Transverse colon (tissue), 4 donors: ENCODE measurements at regions of chr9 and their contacts with region 1.

Region 1: GRCh38 chr9:74773886-74774479 is 113.7 kb downstream of the TRPM6 start:
- DNase-seq: peak; percentile 87
- H3K4me3 ChIP-seq: no peak overlapping the region
- H3K27ac ChIP-seq: no peak overlapping the region
- H3K4me1 ChIP-seq: peaks cover 0 to 8% (median 0%) of the 10 kb centered on the region in 4 donors
- H3K27me3 ChIP-seq: no peaks in the 10 kb centered on the region
- CTCF ChIP-seq: peak; percentile 86 to 90 (median 87)
- EP300 ChIP-seq: no peak
- POLR2A ChIP-seq: no peak

Region 2: GRCh38 chr9:73132034-73132776 is 1641.8 kb before region 1 on chr9:
- in situ Hi-C with region 1: no loop called
- intact Hi-C with region 1: no loop called
- DNase-seq: peak; percentile 65
- H3K4me3 ChIP-seq: peak overlapping the region; percentile 39 to 59 (median 42)
- H3K27ac ChIP-seq: peak overlapping the region; percentile 73 to 86 (median 82)
- H3K4me1 ChIP-seq: peaks cover 0 to 19% (median 8%) of the 10 kb centered on the region in 4 donors
- H3K27me3 ChIP-seq: no peaks in the 10 kb centered on the region
- CTCF ChIP-seq: no peak
- EP300 ChIP-seq: no peak
- POLR2A ChIP-seq: peak; percentile 66

Region 3: DNA sequence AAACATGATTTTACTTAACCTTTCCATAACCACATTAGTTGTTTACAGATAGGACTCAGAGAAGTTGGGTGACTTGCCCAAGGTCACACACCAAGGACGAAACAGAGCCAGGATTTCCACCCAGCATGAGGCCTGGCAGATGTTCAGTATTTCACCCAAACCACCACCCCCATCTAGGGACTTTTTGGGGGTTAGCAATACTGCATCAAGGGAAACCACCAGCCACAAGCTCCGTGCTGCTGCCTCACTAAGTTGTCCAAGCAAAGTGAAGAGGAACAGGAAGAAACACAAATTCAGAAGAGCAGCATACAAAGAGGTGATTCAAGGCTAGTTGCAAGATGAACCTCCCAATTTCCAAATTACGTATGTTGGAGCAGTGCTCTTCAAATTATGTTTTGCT is 496.5 kb before region 1 on chr9:
- in situ Hi-C with region 1: no loop called
- intact Hi-C with region 1: no loop called
- DNase-seq: no peak
- H3K4me3 ChIP-seq: no peak overlapping the region
- H3K27ac ChIP-seq: no peak overlapping the region
- H3K4me1 ChIP-seq: no peaks in the 10 kb centered on the region
- H3K27me3 ChIP-seq: no peaks in the 10 kb centered on the region
- CTCF ChIP-seq: no peak
- EP300 ChIP-seq: no peak
- POLR2A ChIP-seq: no peak

Region 4: DNA sequence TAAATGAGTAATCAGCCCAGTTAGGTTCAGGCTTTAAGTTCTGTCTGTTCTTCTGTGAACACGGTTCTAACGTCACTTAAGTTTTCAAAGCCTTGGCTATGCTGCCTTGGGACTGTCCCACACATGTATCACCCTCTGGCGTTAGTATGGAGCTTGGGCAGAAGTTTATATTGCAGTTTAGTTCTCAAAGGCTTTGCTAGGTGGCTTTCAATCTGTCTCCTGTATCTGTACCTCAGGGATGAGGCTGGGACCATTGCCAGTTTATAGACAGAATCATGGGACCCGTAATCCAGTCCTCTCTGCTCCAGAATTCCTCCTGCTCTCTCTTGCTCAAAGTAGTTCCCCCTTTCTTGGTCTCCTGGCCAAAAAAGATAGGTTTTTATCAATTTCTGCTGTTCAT is 166.6 kb after region 1 on chr9:
- in situ Hi-C with region 1: loop called in 1 of 4 experiments (anchors 10 kb)
- intact Hi-C with region 1: no loop called
- DNase-seq: peak; percentile 18
- H3K4me3 ChIP-seq: no peak overlapping the region
- H3K27ac ChIP-seq: no peak overlapping the region
- H3K4me1 ChIP-seq: no peaks in the 10 kb centered on the region
- H3K27me3 ChIP-seq: no peaks in the 10 kb centered on the region
- CTCF ChIP-seq: peak in 1 of 5 experiments; percentile 6
- EP300 ChIP-seq: no peak
- POLR2A ChIP-seq: no peak

Region 5: GRCh38 chr9:75001719-75002422 is 227.9 kb after region 1 on chr9:
- in situ Hi-C with region 1: loop called (anchors 5 to 10 kb)
- intact Hi-C with region 1: loop called (anchors 2 kb)
- DNase-seq: no peak
- H3K4me3 ChIP-seq: no peak overlapping the region
- H3K27ac ChIP-seq: peak overlapping the region; percentile 56 to 72 (median 68)
- H3K4me1 ChIP-seq: peaks cover 0 to 21% (median 8%) of the 10 kb centered on the region in 4 donors
- H3K27me3 ChIP-seq: no peaks in the 10 kb centered on the region
- CTCF ChIP-seq: peak; percentile 72 to 92 (median 77)
- EP300 ChIP-seq: no peak
- POLR2A ChIP-seq: no peak